ENCODE measurements at regions of chr6 and their contacts with region 1.

Region 1: GRCh38 chr6:143859888-143860660 is 4.2 kb upstream of the ZC2HC1B start:
- DNase-seq: no peak
- H3K4me3 ChIP-seq: no peak overlapping the region
- H3K27ac ChIP-seq: no peak overlapping the region
- H3K4me1 ChIP-seq: no peaks in the 10 kb centered on the region
- H3K27me3 ChIP-seq: no peaks in the 10 kb centered on the region
- CTCF ChIP-seq: no peak

Region 2: DNA sequence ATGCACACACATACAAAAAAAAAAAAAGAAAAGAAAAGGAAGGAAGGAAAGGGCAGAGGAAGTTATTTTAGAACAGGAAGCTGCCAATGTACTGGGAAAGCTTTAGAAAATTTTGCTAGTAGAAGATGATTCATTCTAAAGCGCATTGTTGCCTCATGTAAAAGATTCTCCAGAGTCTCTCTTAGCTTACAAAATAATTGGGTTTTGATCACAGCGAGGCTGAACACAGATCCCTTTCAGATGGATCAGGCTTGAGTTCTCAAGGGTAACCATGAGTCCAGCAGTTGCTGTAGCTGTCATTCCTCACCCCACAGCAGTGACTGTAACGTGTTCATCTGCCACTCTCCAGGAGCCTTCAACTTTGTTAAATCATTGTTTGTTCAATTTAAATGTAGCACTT is 100.4 kb before region 1 on chr6:
- CTCF ChIA-PET with region 1: no interaction called
- dilution Hi-C with region 1: loop called (anchors 5 kb)
- in situ Hi-C with region 1: no loop called
- intact Hi-C with region 1: no loop called
- DNase-seq: no peak
- H3K4me3 ChIP-seq: no peak overlapping the region
- H3K27ac ChIP-seq: no peak overlapping the region
- H3K4me1 ChIP-seq: no peaks in the 10 kb centered on the region
- H3K27me3 ChIP-seq: no peaks in the 10 kb centered on the region
- CTCF ChIP-seq: no peak

Measured in mammary epithelial cell (primary cell).